AG04450 (cell line): ENCODE measurements at regions of chr3 and their contacts with region 1.

Region 1: GRCh38 chr3:131794766-131795388 is 239.9 kb downstream of the CPNE4 start:
- DNase-seq: peak; percentile 36
- H3K4me3 ChIP-seq: no peak overlapping the region
- H3K27ac ChIP-seq: no peak overlapping the region
- H3K27me3 ChIP-seq: peaks cover 2% of the 10 kb centered on the region
- CTCF ChIP-seq: peak; percentile 93

Region 2: GRCh38 chr3:131892331-131892730 is 97.5 kb after region 1 on chr3:
- CTCF ChIA-PET with region 1: interaction called, 14 read pairs
- POLR2A ChIA-PET with region 1: no interaction called
- DNase-seq: no peak
- H3K4me3 ChIP-seq: no peak overlapping the region
- H3K27ac ChIP-seq: no peak overlapping the region
- H3K27me3 ChIP-seq: no peaks in the 10 kb centered on the region
- CTCF ChIP-seq: 0 out of 2 replicates have a peak, but pooled peaks have one; percentile 12

Region 3: DNA sequence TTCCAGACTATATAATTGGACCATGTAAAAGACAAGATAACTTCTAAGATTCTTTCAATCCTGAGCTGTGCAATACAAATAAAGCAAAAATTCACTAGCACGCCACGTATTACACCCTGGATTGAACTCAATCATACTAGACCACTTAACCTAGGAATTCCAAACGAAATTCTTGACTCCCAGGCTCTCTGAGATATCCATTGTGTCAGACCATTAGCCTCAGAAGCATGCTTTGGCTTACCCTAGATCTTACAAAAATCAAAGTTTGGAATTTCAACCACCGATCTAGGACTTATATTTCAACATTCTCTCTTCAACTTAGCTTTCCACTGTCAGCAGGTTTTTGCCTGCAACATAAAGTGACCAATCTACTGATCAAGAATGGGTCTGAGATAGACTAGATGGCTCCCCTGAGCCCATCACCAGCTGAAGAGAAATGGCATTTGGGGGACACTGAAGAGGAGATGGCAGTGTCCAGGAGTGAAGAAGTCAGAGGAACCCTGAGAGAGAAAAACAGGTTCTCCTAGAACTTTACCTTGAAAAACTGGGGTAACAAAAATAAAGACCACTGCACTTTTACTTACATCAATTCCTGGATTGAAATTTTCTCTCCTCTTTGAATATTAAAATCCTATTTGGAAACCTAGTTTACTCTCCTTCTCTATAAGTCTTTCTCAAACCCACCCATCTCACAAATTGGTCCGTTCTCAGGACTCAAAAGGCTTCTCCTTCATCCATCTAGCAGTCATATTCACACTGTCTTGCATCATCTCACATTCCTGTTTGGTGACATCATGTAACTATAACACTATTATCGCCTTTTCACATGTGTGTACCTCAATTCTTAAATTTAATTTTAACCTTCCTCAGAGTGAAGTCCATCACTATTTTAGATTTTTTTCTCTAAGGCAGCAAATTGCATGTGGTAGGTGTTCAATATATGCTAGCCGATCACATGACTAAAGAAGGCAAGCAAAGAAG is 221.5 kb after region 1 on chr3:
- CTCF ChIA-PET with region 1: interaction called, 26 read pairs
- POLR2A ChIA-PET with region 1: no interaction called
- DNase-seq: no peak
- H3K4me3 ChIP-seq: no peak overlapping the region
- H3K27ac ChIP-seq: no peak overlapping the region
- H3K27me3 ChIP-seq: no peaks in the 10 kb centered on the region
- CTCF ChIP-seq: no peak

Region 4: DNA sequence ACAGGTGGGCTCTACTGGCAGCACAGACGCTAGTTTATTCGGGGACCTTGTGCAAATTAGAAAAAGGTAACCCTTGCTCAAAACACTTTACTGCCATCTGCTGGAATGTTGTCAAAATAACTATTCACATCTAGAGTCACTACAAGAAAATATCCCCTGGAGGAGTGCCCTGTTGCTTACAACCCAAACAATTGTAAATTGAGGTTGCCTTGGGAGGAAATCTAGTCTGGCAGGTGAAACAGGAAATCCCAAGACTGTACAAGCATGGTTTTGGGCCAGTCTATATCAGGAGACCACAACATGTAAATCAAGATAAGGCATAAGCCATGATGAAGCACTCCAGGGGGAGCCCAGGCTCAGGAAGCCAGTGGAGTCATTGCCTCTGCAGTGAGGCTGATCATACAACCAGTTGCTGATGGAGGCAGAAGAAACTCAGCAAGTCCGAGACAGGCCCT is 385.5 kb after region 1 on chr3:
- CTCF ChIA-PET with region 1: interaction called, 12 read pairs
- POLR2A ChIA-PET with region 1: no interaction called
- DNase-seq: peak; percentile 20
- H3K4me3 ChIP-seq: no peak overlapping the region
- H3K27ac ChIP-seq: no peak overlapping the region
- H3K27me3 ChIP-seq: peaks cover 2% of the 10 kb centered on the region
- CTCF ChIP-seq: peak; percentile 66